Ascending aorta (tissue), 2 donors: ENCODE measurements at regions of chr12 and their contacts with region 1.

Region 1: DNA sequence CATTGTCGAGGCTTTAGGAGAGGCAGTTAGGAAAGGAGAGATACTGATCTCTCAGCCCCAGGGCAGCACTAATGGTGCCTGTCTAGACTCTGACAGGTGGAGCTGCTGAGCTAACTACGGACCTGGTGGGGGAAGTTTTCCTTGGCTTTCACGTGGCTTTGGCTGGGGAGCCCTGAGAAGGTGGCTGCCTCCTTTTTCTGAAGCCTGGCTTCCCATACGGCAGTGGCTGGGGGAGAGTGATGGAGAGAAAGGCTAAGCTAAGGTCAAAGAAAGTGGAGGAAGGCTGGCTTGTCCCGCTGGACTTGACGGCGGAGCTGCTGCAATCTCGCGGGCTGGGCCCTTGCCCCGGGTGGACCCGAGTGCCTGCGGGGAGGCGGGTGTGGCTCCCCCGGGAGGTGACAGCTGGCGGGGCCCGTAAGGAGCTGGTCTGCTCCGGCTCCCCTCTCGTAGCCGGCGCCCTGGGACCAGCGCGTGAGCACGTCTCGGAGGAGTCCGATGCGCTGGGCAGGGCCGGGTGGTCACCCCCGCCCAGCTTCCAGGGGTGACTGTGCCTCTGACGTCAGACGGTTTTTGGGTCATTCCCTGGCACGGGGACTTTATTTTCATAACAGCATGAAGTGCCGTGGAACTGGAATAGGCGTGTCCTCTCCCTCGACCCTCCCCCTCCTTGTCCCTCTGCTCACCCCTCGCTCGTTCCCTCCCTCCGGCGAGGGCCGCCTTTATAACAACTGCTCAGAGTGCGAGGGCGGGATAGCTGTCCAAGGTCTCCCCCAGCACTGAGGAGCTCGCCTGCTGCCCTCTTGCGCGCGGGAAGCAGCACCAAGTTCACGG is at the start of gene GPRC5A:
- DNase-seq: peak; percentile 93 to 99
- H3K4me3 ChIP-seq: peak within 1 kb of the TSS; percentile 65 to 70
- H3K27ac ChIP-seq: peak within 1 kb of the TSS; percentile 93 to 94
- H3K4me1 ChIP-seq: peaks cover 0 to 4% of the 10 kb centered on the region in 2 donors
- H3K27me3 ChIP-seq: no peaks in the 10 kb centered on the region
- CTCF ChIP-seq: peak in 2 of 3 experiments; percentile 19 to 35
- total RNA-seq, gene GPRC5A: 23.8 TPM

Region 2: DNA sequence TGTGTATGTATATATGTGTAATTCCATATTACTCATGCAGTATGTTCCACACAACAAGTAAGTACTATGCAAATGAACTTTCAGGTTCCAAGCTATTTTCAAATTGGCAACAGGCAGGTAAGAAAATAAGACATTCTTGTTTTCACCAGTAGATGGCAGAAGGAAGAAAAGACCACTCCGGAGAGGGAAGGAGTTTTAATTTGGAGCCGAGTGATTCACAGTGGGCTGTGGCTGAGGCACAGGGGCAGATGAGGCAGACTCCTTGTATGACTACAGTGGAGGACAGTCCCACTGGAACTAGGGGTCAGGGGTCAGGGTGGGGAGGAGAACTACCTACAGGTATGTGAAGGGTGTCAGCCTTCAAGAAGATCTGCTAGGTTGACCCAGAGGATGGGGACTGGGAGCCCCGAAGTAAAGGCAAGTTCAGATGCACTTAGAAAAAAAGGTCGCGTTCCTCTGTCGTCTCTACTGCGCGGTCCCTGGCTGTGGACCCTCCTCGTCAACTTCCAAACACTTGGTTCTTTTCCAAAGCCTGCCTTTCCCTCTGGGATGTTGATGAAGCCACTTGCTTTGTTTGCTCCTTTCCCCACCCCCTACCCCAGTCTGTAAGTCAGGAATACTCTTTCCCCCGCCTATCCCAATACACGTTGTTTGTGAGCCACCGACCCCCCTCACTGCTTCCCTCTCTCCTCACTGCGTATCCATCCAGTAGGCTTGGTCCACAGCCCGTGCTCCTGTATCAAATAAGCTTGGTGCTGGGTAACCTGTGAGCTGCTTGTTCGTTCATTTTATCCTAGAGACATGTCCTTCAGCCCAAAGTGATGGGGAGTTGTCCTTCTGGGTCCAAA is 53.8 kb before region 1 on chr12:
- intact Hi-C with region 1: loop called (anchors 1 kb)
- DNase-seq: peak; percentile 16 to 83
- H3K4me3 ChIP-seq: no peak overlapping the region
- H3K27ac ChIP-seq: no peak overlapping the region
- H3K4me1 ChIP-seq: peaks cover 0 to 11% of the 10 kb centered on the region in 2 donors
- H3K27me3 ChIP-seq: no peaks in the 10 kb centered on the region
- CTCF ChIP-seq: peak; percentile 55 to 74 (median 72)

Region 3: GRCh38 chr12:12901158-12901791 is 10.2 kb after region 1 on chr12:
- intact Hi-C with region 1: no loop called
- DNase-seq: peak; percentile 71 to 91
- H3K4me3 ChIP-seq: peak overlapping the region in 1 of 2 donors; percentile 58
- H3K27ac ChIP-seq: peak overlapping the region; percentile 93 to 96
- H3K4me1 ChIP-seq: peaks cover 5 to 61% of the 10 kb centered on the region in 2 donors
- H3K27me3 ChIP-seq: no peaks in the 10 kb centered on the region
- CTCF ChIP-seq: no peak

Region 4: GRCh38 chr12:14774906-14775762 is 1884.1 kb after region 1 on chr12:
- intact Hi-C with region 1: loop called (anchors 5 kb)
- DNase-seq: peak in 1 of 2 donors; percentile 84
- H3K4me3 ChIP-seq: peak overlapping the region; percentile 78 to 87
- H3K27ac ChIP-seq: peak overlapping the region; percentile 99
- H3K4me1 ChIP-seq: peaks cover 0 to 15% of the 10 kb centered on the region in 2 donors
- H3K27me3 ChIP-seq: no peaks in the 10 kb centered on the region
- CTCF ChIP-seq: no peak